ENCODE measurements at regions of chr11 and their contacts with region 1.

Region 1: GRCh38 chr11:15101072-15101709 is 13.5 kb upstream of the INSC start:
- DNase-seq: peak; percentile 71
- ATAC-seq: peak; percentile 80
- H3K4me3 Mint-ChIP-seq: no peak overlapping the region
- H3K27ac Mint-ChIP-seq: no peak overlapping the region
- H3K4me1 Mint-ChIP-seq: peaks cover 6% of the 10 kb centered on the region
- H3K27me3 Mint-ChIP-seq: peaks cover 29% of the 10 kb centered on the region

Region 2: DNA sequence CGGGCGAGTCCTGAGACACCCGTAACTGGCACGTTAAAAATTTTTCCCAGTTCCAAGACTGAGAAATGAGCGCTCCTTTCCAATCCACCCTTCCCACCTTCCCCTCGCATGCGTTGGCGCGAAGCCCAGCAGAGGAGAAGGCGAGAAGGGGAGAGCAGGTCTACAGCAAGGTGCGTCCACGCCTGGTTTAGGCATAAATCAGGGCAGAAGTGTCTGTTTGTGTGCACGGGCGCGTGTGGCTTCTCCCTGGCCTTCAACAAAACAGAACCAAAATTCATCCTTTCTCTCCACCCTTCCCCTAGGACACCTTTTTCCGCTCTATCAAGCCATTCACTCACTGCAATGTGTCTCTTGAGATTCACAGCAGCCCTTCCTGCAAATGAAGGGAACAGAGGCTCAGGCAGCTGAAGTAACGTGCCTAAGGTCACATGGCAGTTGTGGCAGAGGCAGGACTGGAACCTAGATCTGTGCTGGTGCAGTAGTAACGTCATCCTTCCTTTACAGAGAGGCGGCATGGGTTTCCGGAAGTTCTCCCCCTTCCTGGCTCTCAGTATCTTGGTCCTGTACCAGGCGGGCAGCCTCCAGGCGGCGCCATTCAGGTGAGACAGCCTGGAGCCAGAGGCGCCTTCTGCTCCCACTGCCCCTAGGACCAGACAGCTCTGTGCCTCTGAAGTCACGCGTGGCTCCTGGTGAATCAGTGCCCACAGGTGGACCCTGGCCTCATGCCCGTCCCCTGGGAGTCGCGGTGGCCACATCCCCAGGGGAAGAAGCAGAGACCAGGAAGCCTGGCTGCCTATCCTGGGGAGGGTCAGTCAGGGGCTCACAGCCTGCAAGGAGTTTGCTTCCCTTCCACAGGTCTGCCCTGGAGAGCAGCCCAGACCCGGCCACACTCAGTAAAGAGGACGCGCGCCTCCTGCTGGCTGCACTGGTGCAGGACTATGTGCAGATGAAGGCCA is 26.7 kb before region 1 on chr11:
- CTCF ChIA-PET with region 1: interaction called, 15 read pairs
- DNase-seq: peak; percentile 91
- ATAC-seq: peak; percentile 89
- H3K4me3 Mint-ChIP-seq: peak overlapping the region; percentile 70
- H3K27ac Mint-ChIP-seq: peak overlapping the region; percentile 47
- H3K4me1 Mint-ChIP-seq: peaks cover 21% of the 10 kb centered on the region
- H3K27me3 Mint-ChIP-seq: peaks cover 30% of the 10 kb centered on the region

Region 3: GRCh38 chr11:15118431-15118830 is 17.2 kb after region 1 on chr11:
- CTCF ChIA-PET with region 1: interaction called, 22 read pairs
- DNase-seq: peak; percentile 62
- ATAC-seq: peak; percentile 83
- H3K4me3 Mint-ChIP-seq: no peak overlapping the region
- H3K27ac Mint-ChIP-seq: peak overlapping the region; percentile 8
- H3K4me1 Mint-ChIP-seq: peaks cover 43% of the 10 kb centered on the region
- H3K27me3 Mint-ChIP-seq: peaks cover 51% of the 10 kb centered on the region

Region 4: DNA sequence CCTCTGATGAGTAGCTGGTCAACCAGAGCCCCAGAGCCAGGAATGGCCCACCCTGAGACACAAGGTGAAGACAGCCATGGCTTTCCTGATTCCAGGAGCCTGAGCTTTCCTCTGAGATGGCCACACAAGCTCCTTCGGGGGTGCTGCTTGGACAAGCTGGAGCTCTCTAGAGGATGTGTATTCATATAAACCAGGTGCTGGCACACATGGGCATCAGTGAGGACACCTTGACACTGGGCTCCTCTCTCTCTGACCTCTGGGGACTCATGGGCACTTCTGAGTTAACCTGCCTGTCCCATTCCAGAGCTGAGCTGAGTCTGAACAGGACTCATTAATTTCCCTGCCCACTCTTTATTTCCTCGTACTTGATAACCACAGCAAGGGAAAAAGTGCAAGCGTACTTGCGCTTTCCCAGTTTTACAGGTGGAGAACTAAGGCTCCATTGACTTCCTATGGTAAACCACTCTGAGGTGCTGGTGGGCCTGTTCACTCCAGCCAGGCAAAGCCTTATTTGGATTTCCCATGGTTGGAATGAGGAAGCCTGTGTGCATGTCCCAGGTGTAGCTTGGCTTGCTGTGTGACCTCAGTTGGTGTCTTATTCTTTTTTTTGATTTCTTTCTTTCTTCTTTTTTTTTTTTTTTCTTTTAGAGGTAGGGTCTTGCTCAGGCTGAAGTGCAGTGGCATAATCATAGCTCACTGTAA is 38.9 kb after region 1 on chr11:
- CTCF ChIA-PET with region 1: interaction called, 11 read pairs
- DNase-seq: no peak
- ATAC-seq: no peak
- H3K4me3 Mint-ChIP-seq: no peak overlapping the region
- H3K27ac Mint-ChIP-seq: no peak overlapping the region
- H3K4me1 Mint-ChIP-seq: peaks cover 19% of the 10 kb centered on the region
- H3K27me3 Mint-ChIP-seq: peaks cover 8% of the 10 kb centered on the region

Region 5: DNA sequence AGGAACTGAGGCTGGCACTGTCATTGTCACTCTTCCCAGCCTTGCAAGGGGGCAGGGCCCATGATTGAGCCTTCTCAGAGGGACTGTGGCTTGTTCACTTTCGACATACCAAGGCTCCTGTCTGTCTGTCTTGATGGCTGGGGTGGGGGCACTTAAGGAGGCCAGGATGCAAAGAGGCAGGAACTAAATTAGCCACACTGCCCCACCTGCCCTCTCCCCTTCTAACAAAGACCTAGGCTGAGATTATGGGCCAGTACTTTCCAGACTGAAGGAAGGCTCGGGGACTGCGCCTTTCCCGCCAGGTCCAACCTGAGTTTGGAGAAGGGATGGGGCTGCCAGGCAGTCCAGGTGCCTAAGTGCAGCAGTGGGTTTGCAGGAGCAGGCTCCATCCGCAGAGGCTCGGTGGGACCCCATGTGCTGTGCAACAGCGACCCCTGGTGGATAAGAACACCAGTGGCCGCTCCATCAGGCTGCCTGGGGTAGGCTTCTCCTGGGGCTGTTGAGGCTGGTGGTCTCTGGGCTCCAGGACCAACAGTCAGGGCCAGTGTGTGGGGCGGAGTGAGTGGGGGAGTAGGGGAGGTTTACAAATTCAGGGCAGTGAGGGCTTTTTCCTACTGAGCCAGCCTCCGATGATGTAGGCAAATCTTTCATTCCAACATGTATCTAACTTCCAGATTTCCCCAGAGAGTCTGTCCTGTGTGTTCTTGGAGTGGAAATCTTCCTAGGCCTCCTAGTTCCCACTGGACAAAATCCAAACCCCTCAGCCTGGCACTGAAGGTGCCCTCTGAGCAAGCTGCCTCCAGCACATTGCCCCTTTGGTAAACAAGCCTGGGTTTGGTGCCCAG is 107.4 kb after region 1 on chr11:
- CTCF ChIA-PET with region 1: interaction called, 59 read pairs
- DNase-seq: peak; percentile 82
- ATAC-seq: peak; percentile 92
- H3K4me3 Mint-ChIP-seq: no peak overlapping the region
- H3K27ac Mint-ChIP-seq: no peak overlapping the region
- H3K4me1 Mint-ChIP-seq: no peaks in the 10 kb centered on the region
- H3K27me3 Mint-ChIP-seq: peaks cover 6% of the 10 kb centered on the region

Region 6: GRCh38 chr11:15551901-15552851 is 451.0 kb after region 1 on chr11:
- CTCF ChIA-PET with region 1: no interaction called
- DNase-seq: no peak
- ATAC-seq: no peak
- H3K4me3 Mint-ChIP-seq: no peak overlapping the region
- H3K27ac Mint-ChIP-seq: no peak overlapping the region
- H3K4me1 Mint-ChIP-seq: no peaks in the 10 kb centered on the region
- H3K27me3 Mint-ChIP-seq: no peaks in the 10 kb centered on the region